ENCODE measurements at regions of chr11 and their contacts with region 1.

Region 1: DNA sequence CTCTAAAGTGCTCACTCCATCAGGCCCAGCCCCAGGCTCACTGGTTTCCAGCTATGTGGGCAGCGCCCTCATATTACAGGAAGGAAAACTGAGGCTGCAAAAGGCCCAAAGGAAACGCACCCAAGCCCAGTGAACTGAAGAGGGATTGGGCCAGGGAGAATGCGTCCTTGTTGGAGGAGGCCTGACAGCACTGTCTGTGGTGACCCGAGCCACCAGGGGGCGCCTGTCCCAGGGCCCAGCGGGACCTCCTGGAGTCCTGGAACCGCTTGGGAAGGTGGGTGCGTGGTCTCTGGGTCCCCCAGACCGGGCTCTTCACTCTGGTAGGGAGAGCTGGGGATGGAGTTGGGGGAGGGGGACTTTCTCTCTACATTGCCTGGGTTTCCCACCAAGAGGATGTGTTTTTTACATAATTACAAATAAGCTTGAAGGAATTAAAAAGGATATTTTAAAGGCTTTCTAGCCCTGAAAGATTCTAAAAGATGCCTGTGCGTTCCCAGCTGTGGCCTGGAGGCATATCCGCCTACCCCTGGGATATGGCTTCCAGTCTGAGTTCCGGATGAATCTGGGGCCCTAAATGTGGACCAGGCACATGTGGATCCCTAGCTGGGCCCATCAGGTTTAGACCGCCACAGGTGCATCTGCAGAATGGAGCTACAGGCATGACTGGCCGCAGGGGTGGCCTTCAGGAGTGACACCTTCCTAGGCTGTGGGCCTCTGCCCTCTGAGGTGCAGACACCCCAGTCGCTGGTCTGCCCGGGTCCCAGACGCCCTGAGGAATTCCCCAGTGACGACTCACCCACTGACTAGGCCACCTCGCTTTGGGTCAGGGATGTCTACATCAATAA is 4.2 kb downstream of the SPI1 start:
- DNase-seq: peak; percentile 95
- H3K4me3 Mint-ChIP-seq: no peak overlapping the region
- H3K27ac Mint-ChIP-seq: peak overlapping the region; percentile 41
- H3K4me1 Mint-ChIP-seq: peaks cover 17% of the 10 kb centered on the region
- H3K27me3 Mint-ChIP-seq: peaks cover 2% of the 10 kb centered on the region

Region 2: GRCh38 chr11:47394322-47395222 is 20.5 kb after region 1 on chr11:
- intact Hi-C with region 1: loop called (anchors 2 kb)
- DNase-seq: peak; percentile 88
- H3K4me3 Mint-ChIP-seq: peak overlapping the region; percentile 63
- H3K27ac Mint-ChIP-seq: peak overlapping the region; percentile 93
- H3K4me1 Mint-ChIP-seq: peaks cover 21% of the 10 kb centered on the region
- H3K27me3 Mint-ChIP-seq: no peaks in the 10 kb centered on the region

Region 3: GRCh38 chr11:47407746-47408590 is 33.9 kb after region 1 on chr11 and contains the start of gene SLC39A13:
- intact Hi-C with region 1: loop called (anchors 1 kb)
- DNase-seq: peak; percentile 98
- H3K4me3 Mint-ChIP-seq: peak within 1 kb of the TSS; percentile 97
- H3K27ac Mint-ChIP-seq: peak within 1 kb of the TSS; percentile 97
- H3K4me1 Mint-ChIP-seq: peaks cover 19% of the 10 kb centered on the region
- H3K27me3 Mint-ChIP-seq: no peaks in the 10 kb centered on the region
- total RNA-seq, gene SLC39A13: 13.2 and 13.3 TPM in 2 replicates

Region 4: GRCh38 chr11:47454180-47454644 is 80.1 kb after region 1 on chr11:
- intact Hi-C with region 1: loop called (anchors 2 kb)
- DNase-seq: peak; percentile 90
- H3K4me3 Mint-ChIP-seq: no peak overlapping the region
- H3K27ac Mint-ChIP-seq: no peak overlapping the region
- H3K4me1 Mint-ChIP-seq: peaks cover 4% of the 10 kb centered on the region
- H3K27me3 Mint-ChIP-seq: no peaks in the 10 kb centered on the region